ENCODE measurements at regions of chr12 and their contacts with region 1.

Region 1: GRCh38 chr12:89461649-89462612 is 62.7 kb downstream of the GALNT4 start:
- DNase-seq: no peak
- H3K4me3 ChIP-seq: no peak overlapping the region
- H3K27ac ChIP-seq: peak overlapping the region; percentile 82
- H3K27me3 ChIP-seq: no peaks in the 10 kb centered on the region
- CTCF ChIP-seq: peak; percentile 18

Region 2: GRCh38 chr12:89051065-89051677 is 410.8 kb before region 1 on chr12:
- in situ Hi-C with region 1: loop called (anchors 10 kb)
- DNase-seq: peak; percentile 70
- H3K4me3 ChIP-seq: no peak overlapping the region
- H3K27ac ChIP-seq: no peak overlapping the region
- H3K27me3 ChIP-seq: no peaks in the 10 kb centered on the region
- CTCF ChIP-seq: peak; percentile 81

Region 3: GRCh38 chr12:89352492-89353187 is 109.3 kb before region 1 on chr12 and contains the start of gene DUSP6:
- in situ Hi-C with region 1: loop called (anchors 25 kb)
- DNase-seq: peak; percentile 99
- H3K4me3 ChIP-seq: peak within 1 kb of the TSS; percentile 100
- H3K27ac ChIP-seq: peak within 1 kb of the TSS; percentile 89
- H3K27me3 ChIP-seq: no peaks in the 10 kb centered on the region
- CTCF ChIP-seq: no peak

Region 4: GRCh38 chr12:89405626-89406345 is 56.1 kb before region 1 on chr12:
- in situ Hi-C with region 1: no loop called
- DNase-seq: no peak
- H3K4me3 ChIP-seq: no peak overlapping the region
- H3K27ac ChIP-seq: no peak overlapping the region
- H3K27me3 ChIP-seq: no peaks in the 10 kb centered on the region
- CTCF ChIP-seq: no peak

Region 5: GRCh38 chr12:89610366-89610765 is 148.4 kb after region 1 on chr12:
- in situ Hi-C with region 1: no loop called
- DNase-seq: no peak
- H3K4me3 ChIP-seq: no peak overlapping the region
- H3K27ac ChIP-seq: no peak overlapping the region
- H3K27me3 ChIP-seq: no peaks in the 10 kb centered on the region
- CTCF ChIP-seq: no peak